Kidney (tissue), 22 donors: ENCODE measurements at regions of chr7 and their contacts with region 1.

Region 1: GRCh38 chr7:47273974-47274766 is 307.7 kb downstream of the TNS3 start:
- DNase-seq: no peak
- H3K4me3 ChIP-seq: no peak overlapping the region
- H3K27ac ChIP-seq: no peak overlapping the region
- H3K4me1 ChIP-seq: no peaks in the 10 kb centered on the region
- H3K27me3 ChIP-seq: no peaks in the 10 kb centered on the region
- CTCF ChIP-seq: no peak

Region 2: GRCh38 chr7:47227762-47228177 is 46.4 kb before region 1 on chr7:
- intact Hi-C with region 1: no loop called
- DNase-seq: peak in 1 of 5 donors; percentile 84
- H3K4me3 ChIP-seq: no peak overlapping the region
- H3K27ac ChIP-seq: no peak overlapping the region
- H3K4me1 ChIP-seq: peaks cover 0 to 3% (median 0%) of the 10 kb centered on the region in 3 donors
- H3K27me3 ChIP-seq: no peaks in the 10 kb centered on the region
- CTCF ChIP-seq: no peak

Region 3: GRCh38 chr7:47818796-47819606 is 544.8 kb after region 1 on chr7:
- intact Hi-C with region 1: loop called (anchors 10 kb)
- DNase-seq: peak in 4 of 5 donors; percentile 77 to 93 (median 86)
- H3K4me3 ChIP-seq: no peak overlapping the region
- H3K27ac ChIP-seq: no peak overlapping the region
- H3K4me1 ChIP-seq: peaks cover 0 to 4% (median 0%) of the 10 kb centered on the region in 3 donors
- H3K27me3 ChIP-seq: no peaks in the 10 kb centered on the region
- CTCF ChIP-seq: peak; percentile 99